ENCODE measurements at regions of chr3 and their contacts with region 1.

Region 1: DNA sequence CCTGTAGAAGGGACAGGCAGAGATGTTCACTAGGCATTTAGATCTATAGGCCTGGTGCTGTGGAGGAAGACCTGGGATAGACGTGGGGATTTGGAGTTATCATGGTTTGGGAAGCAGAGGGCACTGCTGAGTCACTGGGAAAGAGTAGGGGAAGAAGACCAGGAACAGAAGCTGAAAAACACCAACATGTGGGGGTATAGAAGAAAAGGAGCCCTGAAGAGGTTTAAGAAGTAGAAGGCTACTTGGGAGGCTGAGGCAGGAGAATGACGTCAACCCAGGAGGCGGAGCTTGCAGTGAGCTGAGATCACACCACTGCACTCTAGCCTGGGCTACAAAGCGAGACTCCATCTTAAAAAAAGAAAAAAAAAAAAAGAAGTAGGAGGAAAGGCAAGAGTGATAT is 19.2 kb downstream of the GRK7 start:
- DNase-seq: no peak
- ATAC-seq: peak; percentile 86
- H3K4me3 Mint-ChIP-seq: no peak overlapping the region
- H3K27ac Mint-ChIP-seq: peak overlapping the region; percentile 26; the same call in 1 of the 2 replicates
- H3K4me1 Mint-ChIP-seq: no peaks in the 10 kb centered on the region
- H3K27me3 Mint-ChIP-seq: no peaks in the 10 kb centered on the region
- CTCF ChIP-seq: no peak

Region 2: GRCh38 chr3:141796081-141796888 is 13.8 kb after region 1 on chr3:
- CTCF ChIA-PET with region 1: interaction called, 16 read pairs
- POLR2A ChIA-PET with region 1: no interaction called
- DNase-seq: no peak
- ATAC-seq: no peak
- H3K4me3 Mint-ChIP-seq: no peak overlapping the region; the same call in 1 of the 2 replicates
- H3K27ac Mint-ChIP-seq: peak overlapping the region; percentile 14; the same call in 1 of the 2 replicates
- H3K4me1 Mint-ChIP-seq: peaks cover 29% of the 10 kb centered on the region
- H3K27me3 Mint-ChIP-seq: peaks cover 33% of the 10 kb centered on the region
- CTCF ChIP-seq: no peak

Region 3: DNA sequence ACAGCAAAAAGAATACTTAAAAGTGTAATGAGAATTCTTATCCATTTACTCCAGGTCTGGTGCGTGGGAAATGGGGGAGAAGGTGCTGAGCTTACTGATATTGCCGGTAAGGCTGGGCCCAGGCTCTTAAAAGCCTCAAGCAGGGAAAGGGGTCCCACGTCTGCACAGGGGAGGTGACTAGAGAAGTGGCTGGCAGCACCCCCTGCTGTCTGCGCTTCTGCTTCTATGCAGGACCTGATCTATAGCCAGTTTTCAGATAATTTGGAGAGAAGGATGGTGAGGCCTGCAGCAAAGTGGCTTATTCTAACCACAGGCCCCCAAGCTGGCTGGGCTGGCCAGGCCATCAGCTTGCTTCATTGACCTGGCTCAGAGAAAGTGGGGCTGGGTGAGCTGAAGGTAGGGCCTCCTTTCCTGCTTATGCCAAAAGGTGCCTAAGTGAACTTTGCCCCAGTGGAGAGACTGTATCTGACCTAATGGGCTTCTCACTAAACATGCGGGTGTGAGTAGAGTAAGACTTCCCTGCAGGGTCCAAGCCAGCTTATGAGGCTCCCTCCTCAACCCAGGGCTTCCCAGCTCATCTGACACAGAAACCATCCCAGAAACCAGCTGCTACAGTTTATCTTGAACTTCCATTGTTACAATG is 63.1 kb after region 1 on chr3:
- CTCF ChIA-PET with region 1: interaction called, 12 read pairs
- POLR2A ChIA-PET with region 1: no interaction called
- DNase-seq: peak; percentile 53
- ATAC-seq: peak; percentile 80
- H3K4me3 Mint-ChIP-seq: no peak overlapping the region
- H3K27ac Mint-ChIP-seq: no peak overlapping the region
- H3K4me1 Mint-ChIP-seq: peaks cover 10% of the 10 kb centered on the region
- H3K27me3 Mint-ChIP-seq: no peaks in the 10 kb centered on the region; the same call in 1 of the 2 replicates
- CTCF ChIP-seq: no peak

Region 4: DNA sequence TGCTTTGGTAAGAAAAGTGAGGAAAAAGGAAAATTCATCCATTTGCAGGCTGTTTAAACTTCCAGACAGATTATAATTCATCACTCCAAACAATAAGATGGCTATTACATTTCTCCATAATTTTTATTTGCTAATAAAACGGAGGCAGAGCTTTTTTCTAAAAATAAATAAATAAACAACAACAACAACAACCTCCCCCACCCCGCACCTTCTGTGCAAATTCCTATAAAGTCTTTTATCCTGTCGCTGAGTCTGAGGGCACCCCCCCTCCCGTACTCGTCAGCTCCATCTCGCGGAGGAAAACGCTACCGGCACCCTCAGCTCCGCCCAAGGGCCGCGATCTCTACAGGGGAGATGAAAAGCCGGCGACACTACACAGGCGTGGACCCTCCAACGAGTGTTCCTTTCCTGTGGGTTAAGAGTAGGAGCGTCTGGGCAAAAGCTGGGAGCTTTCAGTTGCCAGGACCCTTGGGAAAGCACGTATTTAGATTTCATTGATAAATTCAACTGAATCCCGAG is 93.0 kb after region 1 on chr3:
- CTCF ChIA-PET with region 1: interaction called, 15 read pairs
- POLR2A ChIA-PET with region 1: no interaction called
- DNase-seq: peak; percentile 87
- ATAC-seq: peak; percentile 79
- H3K4me3 Mint-ChIP-seq: peak overlapping the region; percentile 91
- H3K27ac Mint-ChIP-seq: peak overlapping the region; percentile 94
- H3K4me1 Mint-ChIP-seq: peaks cover 28% of the 10 kb centered on the region
- H3K27me3 Mint-ChIP-seq: no peaks in the 10 kb centered on the region
- CTCF ChIP-seq: peak; percentile 54

Region 5: GRCh38 chr3:141913150-141913811 is 130.8 kb after region 1 on chr3:
- CTCF ChIA-PET with region 1: interaction called, 10 read pairs
- POLR2A ChIA-PET with region 1: no interaction called
- DNase-seq: no peak
- ATAC-seq: peak; percentile 59
- H3K4me3 Mint-ChIP-seq: no peak overlapping the region
- H3K27ac Mint-ChIP-seq: no peak overlapping the region
- H3K4me1 Mint-ChIP-seq: 0 out of 2 replicates have a peak, but pooled peaks cover 4% of the 10 kb centered on the region
- H3K27me3 Mint-ChIP-seq: no peaks in the 10 kb centered on the region
- CTCF ChIP-seq: peak; percentile 44

Region 6: DNA sequence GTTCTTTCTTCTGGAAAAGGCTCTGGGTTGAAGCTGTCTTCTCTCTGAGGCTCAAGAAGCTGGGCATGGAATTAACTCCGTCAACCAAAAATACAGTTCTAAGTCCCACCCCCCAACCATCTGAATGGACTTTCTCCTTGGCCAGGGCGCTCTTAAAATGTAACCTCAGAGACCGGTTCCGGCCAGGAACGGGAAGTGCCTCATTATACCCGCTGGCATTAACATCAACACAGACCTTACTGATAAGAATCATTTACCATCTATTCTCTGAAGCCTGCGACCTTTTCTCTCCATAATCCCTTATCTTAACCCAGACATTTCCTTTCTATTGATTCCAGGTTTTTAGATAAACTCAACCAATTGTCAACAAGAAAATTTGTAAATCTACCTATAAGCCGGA is 158.6 kb after region 1 on chr3:
- CTCF ChIA-PET with region 1: no interaction called
- POLR2A ChIA-PET with region 1: no interaction called
- DNase-seq: no peak
- ATAC-seq: no peak
- H3K4me3 Mint-ChIP-seq: no peak overlapping the region
- H3K27ac Mint-ChIP-seq: no peak overlapping the region; the same call in 1 of the 2 replicates
- H3K4me1 Mint-ChIP-seq: peaks cover 7% of the 10 kb centered on the region
- H3K27me3 Mint-ChIP-seq: no peaks in the 10 kb centered on the region
- CTCF ChIP-seq: no peak

Measured in WTC11 (cell line).